SK-N-SH (cell line): ENCODE measurements at regions of chr10 and their contacts with region 1.

Region 1: GRCh38 chr10:98253499-98253898 is 14.5 kb downstream of the LOXL4 start:
- DNase-seq: no peak
- H3K4me3 ChIP-seq: no peak overlapping the region
- H3K27ac ChIP-seq: peak overlapping the region in 1 of 2 experiments; percentile 19; a peak in 1 of 4 replicates
- H3K4me1 ChIP-seq: peaks cover 0 to 18% of the 10 kb centered on the region in 2 experiments; a peak in 1 of 4 replicates
- H3K27me3 ChIP-seq: no peaks in the 10 kb centered on the region
- CTCF ChIP-seq: no peak
- EP300 ChIP-seq: no peak
- RAD21 ChIP-seq: no peak

Region 2: DNA sequence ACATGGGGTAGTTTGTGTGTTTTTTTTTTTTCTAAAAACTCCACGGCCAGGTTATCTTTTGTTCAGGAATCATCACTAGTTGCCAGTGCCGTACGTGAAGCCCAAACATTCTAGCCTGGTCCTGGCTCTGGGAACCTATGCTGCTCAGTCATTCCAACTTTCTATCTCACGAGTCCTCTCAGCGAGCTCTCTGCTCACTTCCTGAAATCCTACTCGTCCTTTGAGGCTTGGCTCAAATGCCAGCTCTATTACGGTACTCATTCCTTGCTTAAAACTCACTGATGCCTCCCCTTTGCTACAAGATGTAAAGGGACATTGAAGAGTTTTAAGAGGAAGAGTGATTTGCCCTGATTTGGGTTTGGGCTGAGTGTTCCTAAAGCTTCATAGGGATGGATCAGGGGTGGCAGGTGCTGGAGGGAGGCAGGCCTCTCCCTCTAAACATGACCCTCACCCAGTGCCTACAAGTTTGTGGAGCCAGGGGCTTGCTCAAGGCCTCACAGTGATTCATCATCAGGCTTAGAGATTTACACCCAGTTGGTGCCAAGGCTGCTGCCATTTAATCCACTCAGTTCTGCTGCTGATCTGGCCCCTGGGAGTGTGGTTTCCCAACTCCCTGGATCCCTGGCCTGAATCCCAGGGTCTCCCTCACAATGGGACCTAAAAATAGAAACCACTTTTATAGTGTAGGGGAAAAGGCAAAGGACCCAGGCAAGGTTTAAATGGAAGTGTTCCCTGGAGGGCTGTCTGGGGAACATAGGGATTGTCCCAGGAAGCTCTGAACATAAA is 165.1 kb before region 1 on chr10:
- CTCF ChIA-PET with region 1: no interaction called
- POLR2A ChIA-PET with region 1: no interaction called
- DNase-seq: no peak
- H3K4me3 ChIP-seq: no peak overlapping the region
- H3K27ac ChIP-seq: no peak overlapping the region
- H3K4me1 ChIP-seq: peaks cover 0 to 5% of the 10 kb centered on the region in 2 experiments; a peak in 2 of 4 replicates
- H3K27me3 ChIP-seq: no peaks in the 10 kb centered on the region
- CTCF ChIP-seq: no peak
- EP300 ChIP-seq: no peak
- RAD21 ChIP-seq: no peak

Region 3: DNA sequence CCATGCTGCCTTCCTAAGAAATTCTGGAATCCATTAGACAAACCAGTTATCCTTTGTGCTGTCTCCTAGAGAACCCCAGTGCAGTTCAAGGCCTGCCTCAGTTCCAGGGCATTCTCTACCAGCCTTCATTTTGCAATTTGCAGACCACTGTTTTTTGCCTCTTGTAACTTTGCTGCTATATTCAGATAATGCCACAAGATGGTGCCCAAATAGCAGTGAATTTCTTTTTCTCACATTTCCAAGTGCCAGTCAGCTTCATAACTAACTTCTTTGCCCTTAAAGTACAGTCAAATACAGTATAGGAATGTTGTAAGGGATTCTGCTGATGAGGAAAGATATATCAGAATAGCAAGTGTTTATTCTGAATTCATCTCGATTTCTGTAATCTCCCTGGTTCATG is 10.7 kb before region 1 on chr10:
- CTCF ChIA-PET with region 1: interaction called, 22 read pairs
- POLR2A ChIA-PET with region 1: no interaction called
- DNase-seq: peak; percentile 29
- H3K4me3 ChIP-seq: no peak overlapping the region; a peak in 1 of 4 replicates
- H3K27ac ChIP-seq: no peak overlapping the region
- H3K4me1 ChIP-seq: 0 out of 4 replicates have a peak, but pooled peaks cover 0 to 6% of the 10 kb centered on the region in 2 experiments
- H3K27me3 ChIP-seq: no peaks in the 10 kb centered on the region
- CTCF ChIP-seq: peak; percentile 69
- EP300 ChIP-seq: no peak
- RAD21 ChIP-seq: peak; percentile 85